Upper lobe of right lung (tissue), 1 donor: ENCODE measurements at regions of chr1 and their contacts with region 1.

Region 1: DNA sequence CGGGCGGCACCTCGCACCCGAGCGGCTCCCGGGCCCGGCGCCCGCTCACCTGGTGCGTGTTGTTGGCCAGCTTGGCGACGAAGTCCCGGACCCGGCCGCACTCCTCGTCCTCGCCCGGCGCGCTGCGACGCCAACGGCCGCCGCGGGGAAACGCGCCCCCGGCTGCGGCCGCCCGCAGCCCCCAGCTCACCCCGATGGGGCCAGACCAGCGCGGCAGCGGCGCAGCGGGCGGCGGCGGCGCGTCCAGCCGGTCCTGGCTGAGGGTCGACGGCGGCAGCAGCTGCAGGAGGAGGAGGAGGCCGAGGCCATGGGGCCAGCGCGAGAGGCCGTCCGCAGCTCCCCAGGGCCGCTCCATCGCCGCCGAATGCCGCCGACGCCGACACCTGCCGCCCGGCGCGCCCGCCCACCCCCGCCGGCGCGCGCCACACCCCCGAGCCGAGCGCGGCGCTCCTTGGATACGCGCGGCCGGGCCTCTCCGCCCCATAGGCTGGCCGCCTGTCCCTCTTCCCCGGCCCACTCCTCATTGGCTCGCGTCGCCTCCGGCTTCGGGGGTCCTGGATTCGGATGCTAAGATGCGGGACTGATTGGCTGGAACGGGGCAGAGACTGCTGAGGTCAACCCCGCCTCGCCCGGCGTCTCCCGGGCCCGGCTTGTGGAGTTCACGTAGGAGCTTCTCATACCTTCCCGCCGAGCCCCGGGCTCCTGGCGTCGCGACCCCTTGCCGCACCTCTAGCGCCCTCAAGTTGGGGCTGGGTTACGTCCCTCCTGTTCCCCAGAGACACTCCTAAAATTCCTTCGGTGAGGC is at the start of gene SORT1:
- DNase-seq: peak; percentile 94
- ATAC-seq: peak; percentile 95
- H3K4me3 ChIP-seq: peak within 1 kb of the TSS; percentile 68
- H3K27ac ChIP-seq: peak within 1 kb of the TSS; percentile 80
- H3K4me1 ChIP-seq: peaks cover 47% of the 10 kb centered on the region
- H3K27me3 ChIP-seq: no peaks in the 10 kb centered on the region
- CTCF ChIP-seq: no peak
- total RNA-seq, gene SORT1: 183 TPM

Region 2: DNA sequence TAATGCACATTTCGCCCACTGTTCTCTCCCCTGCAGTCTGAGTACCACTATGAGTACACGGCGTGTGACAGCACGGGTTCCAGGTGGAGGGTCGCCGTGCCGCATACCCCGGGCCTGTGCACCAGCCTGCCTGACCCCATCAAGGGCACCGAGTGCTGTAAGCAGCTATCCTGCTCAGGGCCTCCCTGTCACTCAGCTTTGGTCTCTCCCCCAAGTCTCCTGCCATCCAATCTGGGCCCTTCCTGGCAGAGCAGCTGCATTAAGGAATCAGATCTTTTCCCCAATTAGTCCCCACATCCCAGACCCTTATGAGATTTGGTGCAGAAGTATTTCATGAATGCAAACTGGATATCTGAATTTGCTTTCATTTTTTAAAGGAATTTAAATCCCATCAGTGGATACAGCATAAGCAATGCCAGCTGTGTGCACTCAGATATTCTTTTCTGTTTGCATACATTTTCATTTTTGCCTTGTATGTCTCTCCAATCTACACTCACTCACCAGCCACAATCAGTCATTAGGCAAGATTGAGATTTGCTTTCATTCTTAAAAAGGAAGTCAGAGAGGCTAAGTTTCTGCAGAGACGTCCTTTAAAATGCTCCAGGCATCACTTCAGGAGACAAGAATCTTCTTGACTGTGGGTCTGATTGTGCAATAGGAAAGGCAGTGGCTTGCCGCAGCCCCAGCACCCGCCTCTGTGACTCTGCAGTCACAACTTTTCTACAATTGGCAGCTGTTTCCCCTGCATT is 235.7 kb before region 1 on chr1:
- intact Hi-C with region 1: no loop called
- DNase-seq: peak; percentile 73
- ATAC-seq: peak; percentile 92
- H3K4me3 ChIP-seq: peak overlapping the region; percentile 5
- H3K27ac ChIP-seq: peak overlapping the region; percentile 77
- H3K4me1 ChIP-seq: peaks cover 23% of the 10 kb centered on the region
- H3K27me3 ChIP-seq: no peaks in the 10 kb centered on the region
- CTCF ChIP-seq: no peak

Region 3: DNA sequence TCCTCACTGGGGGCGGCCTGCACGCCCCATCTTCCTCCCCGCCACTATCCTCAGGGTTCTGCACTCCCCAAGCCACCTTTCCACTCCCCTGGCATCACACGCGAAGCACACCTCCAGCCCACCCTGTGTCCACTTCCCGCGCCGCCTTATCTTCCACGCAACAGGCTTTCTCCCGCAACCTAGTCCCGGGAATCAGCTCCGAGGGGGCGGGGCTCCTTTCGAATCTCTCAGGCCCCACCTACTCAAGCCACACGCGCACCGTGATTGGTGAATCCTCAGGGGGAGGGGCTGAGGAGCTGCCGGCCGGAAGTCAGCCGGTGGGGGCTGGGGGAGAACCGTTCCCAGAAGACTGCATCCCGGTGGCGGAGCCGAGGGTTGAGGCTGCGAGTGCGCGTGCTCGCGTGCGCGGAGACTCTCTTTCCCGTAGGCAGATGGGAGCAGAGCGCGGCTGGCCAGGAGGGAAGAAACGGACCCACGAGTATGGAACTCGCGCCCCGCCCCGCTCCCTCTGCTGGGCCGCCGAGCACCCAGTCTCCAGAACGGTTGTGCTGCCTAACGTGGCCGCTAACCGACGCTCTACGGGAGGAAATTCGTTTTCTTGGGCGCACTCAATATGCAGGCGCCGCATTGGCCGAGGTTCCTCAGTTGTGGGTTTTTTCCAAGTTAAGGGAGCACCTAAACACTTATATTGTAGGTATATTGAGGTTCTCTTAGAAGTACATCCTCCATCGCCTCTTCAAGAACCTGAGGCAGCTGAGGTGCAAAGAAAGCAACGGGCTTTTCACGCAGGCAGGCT is 114.6 kb before region 1 on chr1 and contains the start of gene PSRC1:
- intact Hi-C with region 1: loop called (anchors 5 kb)
- DNase-seq: peak; percentile 97
- ATAC-seq: peak; percentile 99
- H3K4me3 ChIP-seq: peak within 1 kb of the TSS; percentile 75
- H3K27ac ChIP-seq: peak within 1 kb of the TSS; percentile 86
- H3K4me1 ChIP-seq: peaks cover 20% of the 10 kb centered on the region
- H3K27me3 ChIP-seq: no peaks in the 10 kb centered on the region
- CTCF ChIP-seq: peak; percentile 55
- total RNA-seq, gene PSRC1: 2.9 TPM

Region 4: DNA sequence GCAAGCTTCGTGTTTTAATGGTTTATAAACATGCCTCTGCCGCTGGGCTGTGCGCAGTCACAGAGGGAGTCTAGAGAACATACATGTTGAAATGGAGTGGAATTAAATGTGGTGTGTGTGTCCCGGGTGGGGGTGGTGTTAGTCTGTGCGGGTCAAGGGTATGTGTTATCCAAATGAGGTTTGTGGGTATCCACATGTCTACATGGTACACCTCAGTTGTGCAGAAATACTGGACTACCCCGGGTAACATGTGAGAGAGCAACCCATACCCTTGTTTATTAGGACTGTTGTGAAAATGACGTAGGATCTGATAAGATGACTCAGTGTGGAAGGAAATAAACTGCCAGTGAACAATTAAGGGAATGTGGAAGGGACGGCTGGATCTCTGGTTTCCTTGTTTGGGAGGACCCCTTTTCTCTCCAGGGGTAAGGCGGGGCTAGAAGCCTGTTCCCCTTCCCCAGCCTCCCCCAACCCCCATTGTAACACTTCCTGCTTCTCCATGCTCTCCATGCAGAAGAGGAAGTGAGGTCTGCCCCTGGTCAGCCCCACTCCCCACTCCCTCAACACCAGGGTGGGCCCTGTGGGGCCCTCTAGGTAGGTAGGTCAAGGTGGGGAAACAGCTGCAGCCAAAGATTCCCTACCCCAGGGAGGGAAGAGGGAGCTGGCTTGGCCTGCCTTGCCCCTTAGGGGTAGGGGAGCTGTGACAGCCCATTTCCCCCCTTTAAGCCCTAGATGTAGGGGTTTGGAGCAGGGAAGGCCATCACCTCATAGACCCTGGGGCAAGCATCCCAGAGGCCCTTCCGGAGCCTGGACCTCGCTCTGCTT is 365.3 kb after region 1 on chr1:
- intact Hi-C with region 1: no loop called
- DNase-seq: peak; percentile 45
- ATAC-seq: peak; percentile 9
- H3K4me3 ChIP-seq: no peak overlapping the region
- H3K27ac ChIP-seq: no peak overlapping the region
- H3K4me1 ChIP-seq: peaks cover 8% of the 10 kb centered on the region
- H3K27me3 ChIP-seq: no peaks in the 10 kb centered on the region
- CTCF ChIP-seq: no peak